AG04450 (cell line): ENCODE measurements at regions of chr5 and their contacts with region 1.

Region 1: GRCh38 chr5:160021831-160022446 is 13.0 kb downstream of the TTC1 start:
- DNase-seq: peak; percentile 55
- H3K4me3 ChIP-seq: no peak overlapping the region
- H3K27ac ChIP-seq: no peak overlapping the region
- H3K27me3 ChIP-seq: no peaks in the 10 kb centered on the region
- CTCF ChIP-seq: peak; percentile 76

Region 2: GRCh38 chr5:159773062-159773924 is 248.6 kb before region 1 on chr5:
- CTCF ChIA-PET with region 1: no interaction called
- POLR2A ChIA-PET with region 1: no interaction called
- DNase-seq: peak; percentile 46
- H3K4me3 ChIP-seq: peak overlapping the region; percentile 56
- H3K27ac ChIP-seq: peak overlapping the region; percentile 65
- H3K27me3 ChIP-seq: no peaks in the 10 kb centered on the region
- CTCF ChIP-seq: no peak

Region 3: DNA sequence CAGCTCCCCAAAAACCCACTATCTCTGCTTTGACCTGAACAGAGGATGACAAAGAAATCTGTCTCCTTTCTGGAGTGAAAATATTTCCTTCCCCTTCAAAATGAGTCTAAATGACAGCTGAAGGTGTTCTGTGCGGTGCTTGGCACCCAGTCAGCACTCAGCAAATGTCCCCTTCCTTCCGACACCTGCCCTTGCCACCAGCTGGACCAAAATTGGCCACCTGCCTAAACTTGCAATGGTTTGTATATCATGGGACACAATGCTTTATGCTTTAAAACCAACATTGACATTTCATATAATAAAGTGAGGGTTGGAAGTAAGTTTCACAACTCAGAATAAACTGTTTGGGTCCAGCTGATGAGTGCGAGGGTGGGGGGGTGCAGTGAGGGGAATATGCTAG is 20.5 kb before region 1 on chr5:
- CTCF ChIA-PET with region 1: interaction called, 14 read pairs
- POLR2A ChIA-PET with region 1: no interaction called
- DNase-seq: no peak
- H3K4me3 ChIP-seq: no peak overlapping the region
- H3K27ac ChIP-seq: no peak overlapping the region
- H3K27me3 ChIP-seq: peaks cover 2% of the 10 kb centered on the region
- CTCF ChIP-seq: no peak

Region 4: DNA sequence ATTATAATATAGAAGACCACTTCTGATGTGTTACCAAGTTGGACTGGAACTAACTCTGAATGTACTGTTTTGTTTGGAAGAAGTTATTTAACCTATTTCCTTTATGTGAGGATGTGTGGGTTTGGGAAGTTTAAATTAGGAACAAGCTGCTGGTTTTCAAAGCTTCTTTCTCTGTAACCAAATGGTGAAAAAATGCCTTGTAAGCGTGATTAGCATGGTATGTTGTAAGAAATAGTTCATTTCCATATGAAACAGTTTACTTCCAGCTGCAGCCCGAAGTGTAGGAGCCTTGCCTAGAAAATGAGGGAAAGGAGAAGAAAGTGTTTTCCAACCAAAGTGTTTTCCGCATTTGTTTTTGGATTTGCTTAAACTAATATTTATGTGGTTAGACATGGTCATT is 23.0 kb after region 1 on chr5:
- CTCF ChIA-PET with region 1: interaction called, 14 read pairs
- POLR2A ChIA-PET with region 1: no interaction called
- DNase-seq: no peak
- H3K4me3 ChIP-seq: no peak overlapping the region
- H3K27ac ChIP-seq: no peak overlapping the region
- H3K27me3 ChIP-seq: no peaks in the 10 kb centered on the region
- CTCF ChIP-seq: no peak

Region 5: GRCh38 chr5:160165137-160166068 is 143.5 kb after region 1 on chr5:
- CTCF ChIA-PET with region 1: interaction called, 10 read pairs
- POLR2A ChIA-PET with region 1: interaction called, 11 read pairs
- DNase-seq: peak; percentile 98
- H3K4me3 ChIP-seq: peak overlapping the region; percentile 48
- H3K27ac ChIP-seq: peak overlapping the region; percentile 99
- H3K27me3 ChIP-seq: no peaks in the 10 kb centered on the region
- CTCF ChIP-seq: no peak

Region 6: DNA sequence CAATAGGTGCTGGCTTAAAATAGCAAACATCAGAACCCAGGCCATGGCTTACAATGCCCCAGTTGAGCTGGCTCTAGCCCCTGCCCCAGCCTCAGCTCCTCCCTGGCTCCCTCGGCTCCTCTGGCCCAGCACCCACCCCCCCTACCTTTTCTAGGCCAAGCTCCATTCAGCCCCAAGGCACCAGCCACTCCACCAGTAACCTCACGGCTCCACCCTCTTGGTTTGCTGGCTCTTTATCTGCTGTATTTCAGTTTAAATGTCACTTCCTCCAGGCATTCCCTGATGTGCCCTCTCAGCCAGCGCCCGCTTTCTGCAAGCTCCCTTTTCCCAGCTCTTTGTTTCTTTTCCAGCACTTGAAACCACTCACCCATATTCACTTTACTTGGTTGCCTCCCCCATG is 337.9 kb after region 1 on chr5:
- CTCF ChIA-PET with region 1: interaction called, 21 read pairs
- POLR2A ChIA-PET with region 1: no interaction called
- DNase-seq: no peak
- H3K4me3 ChIP-seq: no peak overlapping the region
- H3K27ac ChIP-seq: no peak overlapping the region
- H3K27me3 ChIP-seq: no peaks in the 10 kb centered on the region
- CTCF ChIP-seq: no peak

Region 7: GRCh38 chr5:160390787-160391696 is 369.1 kb after region 1 on chr5:
- CTCF ChIA-PET with region 1: interaction called, 180 read pairs
- POLR2A ChIA-PET with region 1: no interaction called
- DNase-seq: no peak
- H3K4me3 ChIP-seq: no peak overlapping the region
- H3K27ac ChIP-seq: no peak overlapping the region
- H3K27me3 ChIP-seq: no peaks in the 10 kb centered on the region
- CTCF ChIP-seq: peak; percentile 56